ENCODE measurements at regions of chr6 and their contacts with region 1.

Region 1: DNA sequence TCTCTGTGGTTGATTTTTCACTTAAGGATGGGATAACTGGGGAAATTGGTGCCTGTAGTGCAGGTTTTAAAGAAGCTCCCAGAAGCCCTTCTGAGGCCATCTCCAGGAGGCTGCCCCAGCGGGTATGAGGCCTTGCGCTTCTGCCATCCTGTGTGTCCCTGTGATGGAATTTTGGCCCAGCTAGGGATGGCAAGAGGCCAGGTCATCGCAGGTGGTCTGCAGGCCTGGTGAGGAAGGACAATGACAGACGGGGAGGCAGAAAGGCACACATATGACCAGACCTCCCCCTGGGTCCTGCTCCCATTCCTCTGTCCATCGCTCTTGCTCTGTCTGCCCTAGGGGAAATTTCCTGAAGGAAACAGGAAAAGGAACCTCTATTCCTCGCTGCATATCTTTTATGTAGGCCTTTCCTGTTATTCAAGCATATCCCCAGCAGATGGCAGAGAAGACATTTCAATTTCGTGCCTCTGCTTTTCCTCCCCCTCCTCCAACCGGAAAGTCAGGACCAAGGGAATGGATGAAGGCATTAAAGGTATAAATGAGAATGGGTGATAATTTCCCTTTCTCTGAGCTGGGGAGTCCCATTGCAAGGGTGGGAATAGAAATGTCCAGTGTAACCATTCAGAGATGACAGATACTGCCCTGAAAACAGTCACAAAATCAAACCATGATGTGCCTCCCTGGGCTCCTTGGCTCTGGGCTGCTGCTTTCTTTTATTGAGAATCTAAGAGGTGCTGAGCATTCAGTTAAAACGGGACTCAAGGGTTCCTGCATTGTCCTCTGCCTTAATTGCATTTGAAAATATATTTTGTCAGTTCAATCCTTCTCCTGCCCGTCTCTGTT is 17.6 kb upstream of the HLA-F start:
- H3K4me3 ChIP-seq: no peak overlapping the region
- H3K27ac ChIP-seq: no peak overlapping the region
- H3K4me1 ChIP-seq: no peaks in the 10 kb centered on the region
- CTCF ChIP-seq: peak; percentile 62

Region 2: DNA sequence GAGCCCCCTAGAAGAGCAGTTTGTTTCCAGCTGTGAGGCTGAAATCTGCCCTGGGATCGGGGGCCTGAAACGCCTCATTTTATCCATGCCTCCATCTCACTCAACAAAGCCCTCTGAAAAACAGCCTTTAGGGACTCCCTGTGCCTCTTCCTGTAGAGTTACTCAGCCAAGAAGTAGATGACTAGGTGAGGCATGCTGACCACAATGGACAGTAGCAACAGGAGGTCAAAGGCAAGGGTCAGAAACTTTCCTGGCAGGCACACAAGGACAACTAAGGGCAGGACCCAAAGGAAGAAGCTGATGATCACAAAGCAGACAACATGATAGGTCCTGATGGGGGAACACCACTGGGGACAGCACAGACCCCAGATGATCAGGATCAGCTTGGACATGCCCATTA is 230.6 kb before region 1 on chr6:
- CTCF ChIA-PET with region 1: no interaction called
- POLR2A ChIA-PET with region 1: no interaction called
- H3K4me3 ChIP-seq: no peak overlapping the region
- H3K27ac ChIP-seq: no peak overlapping the region
- H3K4me1 ChIP-seq: no peaks in the 10 kb centered on the region
- CTCF ChIP-seq: no peak

Region 3: DNA sequence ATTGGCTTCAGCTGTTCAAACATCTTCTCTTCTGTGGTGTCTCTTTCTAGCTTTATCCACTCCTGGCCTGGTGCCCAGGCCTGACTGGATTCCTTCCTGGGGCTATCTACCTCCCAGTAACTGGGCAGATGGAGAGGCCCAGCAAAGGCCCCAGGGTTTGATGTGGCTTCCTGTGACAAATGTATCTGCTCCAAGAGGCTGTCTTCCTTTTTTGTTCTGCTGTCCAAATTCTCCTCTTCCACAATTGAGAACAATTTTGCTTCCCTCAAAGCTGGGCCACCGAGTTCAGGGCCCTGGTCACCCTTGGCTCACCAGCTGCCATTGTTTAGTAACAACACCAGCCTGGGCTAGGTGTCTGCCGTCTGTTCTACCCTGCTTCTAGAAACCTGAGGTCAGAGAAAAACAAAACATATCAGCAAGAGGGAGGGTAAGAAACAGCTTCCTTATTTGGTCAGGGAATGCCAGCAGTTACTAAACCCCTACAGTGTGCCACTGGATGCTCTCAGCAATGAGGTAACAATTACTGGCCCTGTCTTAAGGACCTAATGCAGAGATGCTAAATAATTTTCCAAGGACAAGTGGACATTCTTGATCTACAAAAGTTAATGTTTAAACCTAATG is 28.5 kb before region 1 on chr6:
- CTCF ChIA-PET with region 1: interaction called, 15 read pairs
- POLR2A ChIA-PET with region 1: no interaction called
- H3K4me3 ChIP-seq: no peak overlapping the region
- H3K27ac ChIP-seq: no peak overlapping the region
- H3K4me1 ChIP-seq: no peaks in the 10 kb centered on the region
- CTCF ChIP-seq: no peak

Region 4: DNA sequence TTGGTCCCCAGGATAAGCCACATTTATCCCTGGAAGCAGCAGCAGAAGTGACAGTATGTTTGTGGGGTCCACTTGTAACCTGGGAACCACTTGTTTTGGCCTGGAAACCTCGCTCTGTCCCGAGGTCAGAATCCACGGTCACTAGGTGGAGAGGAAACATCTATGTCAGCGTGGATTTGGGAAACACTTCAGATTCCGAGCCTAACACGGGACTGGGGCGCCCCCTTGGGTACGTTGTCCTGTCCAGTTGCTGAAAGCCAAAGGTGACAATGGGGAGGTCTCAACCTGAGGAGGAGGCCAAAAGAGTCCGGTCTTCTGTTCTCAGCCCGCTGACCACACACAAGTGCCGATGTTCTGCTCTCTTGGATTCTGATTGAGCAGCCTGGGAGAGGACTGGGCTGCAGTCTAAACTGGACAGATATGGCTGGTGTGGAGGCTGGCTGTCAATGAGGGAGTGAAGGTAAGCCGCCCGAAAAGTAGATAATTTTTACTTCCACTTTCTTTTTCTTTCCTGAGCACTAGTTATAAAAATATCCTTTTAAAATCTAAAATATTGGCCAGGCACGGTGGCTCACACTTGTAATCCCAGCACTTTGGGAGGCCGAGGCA is 19.8 kb before region 1 on chr6:
- CTCF ChIA-PET with region 1: interaction called, 10 read pairs
- POLR2A ChIA-PET with region 1: no interaction called
- H3K4me3 ChIP-seq: no peak overlapping the region
- H3K27ac ChIP-seq: no peak overlapping the region
- H3K4me1 ChIP-seq: no peaks in the 10 kb centered on the region
- CTCF ChIP-seq: no peak

Region 5: GRCh38 chr6:29720863-29721262 is 15.3 kb after region 1 on chr6:
- CTCF ChIA-PET with region 1: interaction called, 16 read pairs
- POLR2A ChIA-PET with region 1: no interaction called
- H3K4me3 ChIP-seq: no peak overlapping the region
- H3K27ac ChIP-seq: no peak overlapping the region
- H3K4me1 ChIP-seq: no peaks in the 10 kb centered on the region; the same call in 1 of the 2 replicates
- CTCF ChIP-seq: no peak

Region 6: DNA sequence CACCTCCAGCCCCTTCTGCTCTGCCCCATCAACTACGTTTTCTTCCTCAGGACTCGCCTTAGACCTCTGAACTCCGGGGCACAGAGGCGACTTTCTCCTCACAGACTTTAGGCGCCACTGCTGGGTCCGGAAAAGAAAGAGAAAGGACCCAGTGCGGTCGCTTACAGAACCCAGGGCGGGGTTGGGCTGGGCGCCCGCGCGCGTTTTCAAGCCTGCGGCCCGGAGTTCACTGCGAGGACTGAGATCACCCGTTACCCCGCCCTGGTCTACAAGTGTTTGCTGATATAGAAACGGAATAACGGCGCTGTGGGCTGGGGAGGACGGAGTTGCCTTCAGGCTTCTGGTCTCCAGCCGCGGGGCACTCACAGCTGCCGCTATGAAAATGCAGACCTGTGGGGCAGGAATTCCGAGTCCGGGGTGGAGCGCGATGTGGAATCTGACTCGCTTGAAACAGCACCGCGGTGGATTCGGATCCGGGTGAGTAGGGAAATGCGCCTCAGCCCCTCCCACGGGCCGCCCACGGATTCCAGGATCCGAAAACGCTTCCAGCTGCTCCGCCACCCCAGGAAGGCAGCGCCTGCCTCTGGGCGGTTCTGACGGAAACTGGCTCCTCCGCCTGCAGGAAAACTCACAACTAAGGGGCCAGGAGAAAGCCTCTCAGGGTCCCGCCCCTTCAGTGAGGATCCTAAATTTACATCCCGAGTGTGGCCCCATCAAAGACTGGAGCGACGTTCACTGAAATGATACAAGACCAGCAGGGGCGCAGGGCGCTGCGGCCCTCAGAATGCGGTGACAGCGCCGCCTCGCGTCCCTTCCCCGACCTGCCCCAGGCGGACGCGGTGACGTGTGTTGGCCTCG is 47.1 kb after region 1 on chr6:
- CTCF ChIA-PET with region 1: interaction called, 10 read pairs
- POLR2A ChIA-PET with region 1: interaction called, 4 read pairs
- H3K4me3 ChIP-seq: peak overlapping the region; percentile 75
- H3K27ac ChIP-seq: peak overlapping the region; percentile 46; the same call in 1 of the 2 replicates
- H3K4me1 ChIP-seq: peaks cover 5% of the 10 kb centered on the region; the same call in 1 of the 2 replicates
- CTCF ChIP-seq: peak; percentile 99

Region 7: DNA sequence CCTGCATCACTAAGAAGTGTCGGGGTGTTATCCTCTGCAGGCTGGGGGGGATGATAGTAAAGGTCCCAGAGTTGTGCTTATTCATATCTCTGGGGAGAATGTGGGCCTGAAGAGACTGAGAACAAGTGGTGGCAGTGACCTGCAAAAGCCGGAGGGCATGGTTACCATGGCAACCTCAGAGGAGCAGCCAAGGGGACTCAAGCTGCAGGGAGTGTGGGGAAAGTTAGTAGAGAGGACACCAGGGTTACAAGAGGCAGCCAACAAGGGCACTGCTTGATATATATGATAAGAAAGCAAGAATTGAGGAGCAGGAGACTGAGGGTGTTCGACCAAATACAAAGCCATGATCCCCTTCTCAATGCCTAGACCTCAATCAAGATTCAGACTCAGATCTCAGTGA is 63.7 kb after region 1 on chr6:
- CTCF ChIA-PET with region 1: no interaction called
- POLR2A ChIA-PET with region 1: no interaction called
- H3K4me3 ChIP-seq: no peak overlapping the region
- H3K27ac ChIP-seq: no peak overlapping the region
- H3K4me1 ChIP-seq: no peaks in the 10 kb centered on the region
- CTCF ChIP-seq: no peak

Region 8: GRCh38 chr6:30175765-30176164 is 470.2 kb after region 1 on chr6:
- CTCF ChIA-PET with region 1: no interaction called
- POLR2A ChIA-PET with region 1: no interaction called
- H3K4me3 ChIP-seq: no peak overlapping the region
- H3K27ac ChIP-seq: no peak overlapping the region
- H3K4me1 ChIP-seq: no peaks in the 10 kb centered on the region
- CTCF ChIP-seq: no peak

Measured in HEK293 (cell line).